ENCODE measurements at regions of chr11 and their contacts with region 1.

Region 1: GRCh38 chr11:22730319-22730718 is 63.9 kb downstream of the GAS2 start:
- DNase-seq: peak in 6 of 9 donors; percentile 17 to 50 (median 22)
- ATAC-seq: peak; percentile 41
- H3K4me3 ChIP-seq: no peak overlapping the region
- H3K4me3 Mint-ChIP-seq: no peak overlapping the region
- H3K27ac ChIP-seq: no peak overlapping the region
- H3K27ac Mint-ChIP-seq: no peak overlapping the region
- H3K4me1 ChIP-seq: no peaks in the 10 kb centered on the region
- H3K4me1 Mint-ChIP-seq: no peaks in the 10 kb centered on the region
- H3K27me3 ChIP-seq: no peaks in the 10 kb centered on the region
- H3K27me3 Mint-ChIP-seq: peaks cover 0 to 3% (median 0%) of the 10 kb centered on the region in 5 donors

Region 2: DNA sequence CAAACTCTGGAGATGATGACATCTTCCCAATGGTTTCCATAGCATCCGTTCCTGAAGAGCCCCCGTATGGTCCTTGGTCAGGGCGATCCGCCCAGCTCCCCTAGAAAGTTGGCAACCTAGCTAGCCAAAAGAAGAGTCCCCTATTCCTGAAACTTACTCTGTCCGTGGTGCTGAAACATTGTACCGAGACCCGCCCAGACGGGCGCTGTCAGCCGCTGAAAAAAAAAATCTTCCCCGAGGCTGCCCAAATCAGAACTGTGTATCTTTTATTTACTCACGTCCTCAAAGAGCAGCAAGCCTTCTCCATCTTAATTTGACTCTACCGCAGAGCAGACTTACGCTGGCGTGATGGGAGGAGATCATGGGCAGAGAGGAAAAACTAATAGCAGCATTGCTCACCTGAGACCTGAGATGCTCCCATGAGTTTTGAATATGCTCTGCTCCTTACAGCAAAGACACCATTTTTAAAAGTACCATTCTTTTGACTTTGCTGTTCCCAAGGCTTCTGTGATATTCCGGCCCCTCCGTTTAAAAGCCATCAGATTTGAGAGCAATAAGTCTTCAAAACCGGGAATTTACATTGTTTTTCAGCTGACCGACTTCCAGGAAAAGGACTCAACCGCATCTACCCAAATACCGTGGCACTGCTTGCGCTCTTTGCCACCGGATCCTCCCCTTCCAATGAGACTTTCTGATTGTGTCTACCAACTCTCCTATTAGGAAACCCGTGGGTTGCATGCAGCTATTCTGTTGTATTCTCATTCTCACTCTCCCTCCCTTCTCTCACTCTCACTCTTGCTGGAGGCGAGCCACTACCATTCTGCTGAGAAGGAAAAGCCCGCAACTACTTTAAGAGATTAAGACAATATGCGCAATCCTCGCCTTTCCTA is 392.5 kb before region 1 on chr11 and contains the start of gene SLC17A6:
- CTCF ChIA-PET with region 1: no interaction called
- POLR2A ChIA-PET with region 1: no interaction called
- intact Hi-C with region 1: loop called (anchors 1 kb)
- DNase-seq: peak in 2 of 9 donors; percentile 12 to 31
- ATAC-seq: no peak
- H3K4me3 ChIP-seq: no peak within 1 kb of the TSS
- H3K4me3 Mint-ChIP-seq: no peak within 1 kb of the TSS
- H3K27ac ChIP-seq: no peak within 1 kb of the TSS
- H3K27ac Mint-ChIP-seq: no peak within 1 kb of the TSS
- H3K4me1 ChIP-seq: peaks cover 0 to 3% of the 10 kb centered on the region in 2 donors
- H3K4me1 Mint-ChIP-seq: peaks cover 7 to 21% (median 12%) of the 10 kb centered on the region in 7 donors
- H3K27me3 ChIP-seq: peaks cover 4 to 15% of the 10 kb centered on the region in 2 donors
- H3K27me3 Mint-ChIP-seq: peaks cover 55 to 73% (median 61%) of the 10 kb centered on the region in 5 donors
- total RNA-seq, gene SLC17A6: not detected

Region 3: GRCh38 chr11:22426915-22427314 is 303.4 kb before region 1 on chr11:
- CTCF ChIA-PET with region 1: no interaction called
- POLR2A ChIA-PET with region 1: no interaction called
- intact Hi-C with region 1: loop called in 1 of 2 experiments (anchors 1 kb)
- DNase-seq: no peak
- ATAC-seq: no peak
- H3K4me3 ChIP-seq: no peak overlapping the region
- H3K4me3 Mint-ChIP-seq: no peak overlapping the region
- H3K27ac ChIP-seq: no peak overlapping the region
- H3K27ac Mint-ChIP-seq: no peak overlapping the region
- H3K4me1 ChIP-seq: no peaks in the 10 kb centered on the region
- H3K4me1 Mint-ChIP-seq: peaks cover 0 to 3% (median 1%) of the 10 kb centered on the region in 7 donors
- H3K27me3 ChIP-seq: no peaks in the 10 kb centered on the region
- H3K27me3 Mint-ChIP-seq: peaks cover 2 to 28% (median 14%) of the 10 kb centered on the region in 5 donors

Region 4: DNA sequence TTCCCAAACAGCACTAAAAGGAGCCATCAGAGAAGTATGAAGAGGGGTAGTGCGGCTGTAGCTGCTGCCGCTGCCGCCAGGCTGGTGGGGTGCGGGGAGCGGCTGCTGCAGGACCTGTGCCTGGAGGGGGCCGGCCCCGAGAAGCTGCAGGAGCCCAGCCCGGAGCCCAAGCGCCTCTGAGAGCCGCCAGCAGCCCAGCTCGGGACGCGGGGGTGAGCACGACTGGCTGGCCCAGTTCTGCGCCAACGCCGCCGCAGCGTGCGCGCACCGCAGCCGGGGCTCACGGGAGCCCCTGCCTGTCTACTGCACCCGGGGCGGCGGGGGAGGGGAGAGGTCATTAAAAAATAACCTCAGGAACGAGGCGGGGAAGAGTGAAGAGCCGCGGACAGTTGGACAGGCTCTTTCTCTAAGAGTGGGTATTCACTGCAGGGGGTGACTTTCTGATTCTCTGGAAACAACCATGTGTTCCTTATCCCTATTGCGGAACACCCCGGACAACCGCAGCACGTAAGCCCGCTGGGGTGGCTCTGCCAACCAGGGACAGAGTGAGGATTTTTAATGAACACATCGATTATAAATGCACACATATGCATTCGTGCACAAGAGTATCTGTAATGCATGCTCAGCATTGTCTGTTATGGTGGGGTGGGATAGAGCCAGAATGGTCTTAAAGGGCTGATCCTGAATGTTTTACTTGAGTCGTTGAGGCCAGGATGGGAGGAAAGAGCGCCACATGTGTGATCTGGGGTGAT is 63.5 kb before region 1 on chr11:
- CTCF ChIA-PET with region 1: interaction called, 11 read pairs
- POLR2A ChIA-PET with region 1: no interaction called
- intact Hi-C with region 1: loop called in 1 of 2 experiments (anchors 1 kb)
- DNase-seq: peak in 4 of 9 donors; percentile 11 to 32 (median 20)
- ATAC-seq: peak; percentile 31
- H3K4me3 ChIP-seq: no peak overlapping the region
- H3K4me3 Mint-ChIP-seq: peak overlapping the region; percentile 49 to 94 (median 73)
- H3K27ac ChIP-seq: no peak overlapping the region
- H3K27ac Mint-ChIP-seq: peak overlapping the region in 1 of 9 donors; percentile 54
- H3K4me1 ChIP-seq: peaks cover 0 to 5% of the 10 kb centered on the region in 2 donors
- H3K4me1 Mint-ChIP-seq: peaks cover 9 to 24% (median 13%) of the 10 kb centered on the region in 7 donors
- H3K27me3 ChIP-seq: peaks cover 5 to 7% of the 10 kb centered on the region in 2 donors
- H3K27me3 Mint-ChIP-seq: peaks cover 60 to 67% (median 66%) of the 10 kb centered on the region in 5 donors

Measured in naive thymus-derived CD4-positive, alpha-beta T cell (primary cell).